ENCODE measurements at regions of chr1 and their contacts with region 1.

Region 1: DNA sequence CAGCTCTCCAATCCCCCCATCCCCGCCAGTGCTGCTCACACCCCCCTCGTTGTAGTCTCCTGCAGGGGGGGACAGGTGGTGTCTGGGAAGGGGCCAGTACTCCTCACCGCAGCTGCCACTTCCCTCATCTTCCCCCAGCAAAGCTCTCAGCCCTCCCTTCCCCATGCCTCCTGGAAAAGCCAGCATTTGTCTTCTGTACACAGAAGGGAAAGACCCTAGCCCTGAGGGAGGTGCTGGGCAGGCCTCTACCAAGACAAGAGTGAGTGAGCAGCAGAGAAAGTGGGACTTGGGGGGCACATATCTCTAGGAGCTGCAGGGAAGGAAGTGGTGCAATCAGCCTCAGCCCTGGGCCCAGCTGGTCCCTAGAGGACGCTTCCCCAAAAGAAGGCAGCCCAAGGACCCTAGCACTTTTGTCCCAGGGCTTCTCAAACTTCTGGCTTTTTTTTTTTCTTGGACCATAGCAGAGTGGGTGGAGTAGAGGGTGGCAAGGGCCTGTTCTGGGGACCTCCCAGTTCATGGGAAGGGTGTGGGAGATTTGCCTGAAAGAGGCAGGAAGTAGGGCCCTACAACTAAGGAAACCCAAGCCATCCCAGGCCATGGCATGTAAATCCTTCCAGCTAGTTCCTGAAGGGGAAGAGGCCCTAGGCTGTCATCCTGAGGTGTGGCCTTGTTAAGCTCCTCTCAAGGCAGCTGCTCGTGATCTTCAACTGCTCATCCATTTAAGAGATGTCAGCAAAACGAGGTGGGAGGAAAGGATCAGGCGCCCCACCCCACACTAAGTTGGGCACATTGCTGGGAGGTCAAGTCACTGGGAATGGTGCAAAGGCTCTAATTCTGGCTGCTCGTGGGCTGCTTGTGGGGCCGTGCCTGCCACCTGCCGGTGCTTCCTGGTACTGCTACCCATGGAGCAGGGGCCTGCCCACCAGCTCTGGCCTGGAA is 12.6 kb downstream of the ZC3H12A start:
- DNase-seq: peak; percentile 87 to 92
- ATAC-seq: peak; percentile 81 to 86 (median 84)
- H3K4me3 ChIP-seq: no peak overlapping the region
- H3K27ac ChIP-seq: peak overlapping the region; percentile 84
- H3K4me1 ChIP-seq: peaks cover 33% of the 10 kb centered on the region
- H3K27me3 ChIP-seq: no peaks in the 10 kb centered on the region
- CTCF ChIP-seq: peak; percentile 99

Region 2: DNA sequence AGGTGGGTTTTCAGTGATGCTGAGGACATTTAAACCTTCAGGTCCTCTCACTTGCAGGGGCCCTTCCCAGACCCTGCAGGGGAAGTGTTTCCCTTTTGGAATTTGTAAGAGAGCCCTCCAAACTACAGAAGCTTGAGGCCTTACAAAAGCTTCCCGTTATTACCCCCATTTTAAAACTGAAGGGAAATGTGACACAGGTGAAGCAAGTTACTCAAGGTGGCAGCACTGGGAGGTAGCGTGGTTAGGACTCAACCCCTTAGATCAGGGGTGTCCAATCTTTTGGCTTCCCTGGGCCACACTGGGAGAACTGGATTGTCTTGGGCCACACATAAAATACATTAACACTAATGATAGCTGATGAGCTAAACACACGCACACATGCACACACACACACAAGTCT is 28.4 kb before region 1 on chr1:
- intact Hi-C with region 1: loop called (anchors 1 to 2 kb)
- DNase-seq: no peak
- ATAC-seq: no peak
- H3K4me3 ChIP-seq: no peak overlapping the region
- H3K27ac ChIP-seq: no peak overlapping the region
- H3K4me1 ChIP-seq: no peaks in the 10 kb centered on the region
- H3K27me3 ChIP-seq: no peaks in the 10 kb centered on the region
- CTCF ChIP-seq: no peak

Measured in psoas muscle (tissue), 8 donors.